Left cardiac atrium (tissue), 4 donors: ENCODE measurements at regions of chr5 and their contacts with region 1.

Region 1: GRCh38 chr5:134436523-134437339 is 25.1 kb upstream of the CDKN2AIPNL start:
- DNase-seq: peak; percentile 74
- ATAC-seq: peak; percentile 75 to 78

Region 2: DNA sequence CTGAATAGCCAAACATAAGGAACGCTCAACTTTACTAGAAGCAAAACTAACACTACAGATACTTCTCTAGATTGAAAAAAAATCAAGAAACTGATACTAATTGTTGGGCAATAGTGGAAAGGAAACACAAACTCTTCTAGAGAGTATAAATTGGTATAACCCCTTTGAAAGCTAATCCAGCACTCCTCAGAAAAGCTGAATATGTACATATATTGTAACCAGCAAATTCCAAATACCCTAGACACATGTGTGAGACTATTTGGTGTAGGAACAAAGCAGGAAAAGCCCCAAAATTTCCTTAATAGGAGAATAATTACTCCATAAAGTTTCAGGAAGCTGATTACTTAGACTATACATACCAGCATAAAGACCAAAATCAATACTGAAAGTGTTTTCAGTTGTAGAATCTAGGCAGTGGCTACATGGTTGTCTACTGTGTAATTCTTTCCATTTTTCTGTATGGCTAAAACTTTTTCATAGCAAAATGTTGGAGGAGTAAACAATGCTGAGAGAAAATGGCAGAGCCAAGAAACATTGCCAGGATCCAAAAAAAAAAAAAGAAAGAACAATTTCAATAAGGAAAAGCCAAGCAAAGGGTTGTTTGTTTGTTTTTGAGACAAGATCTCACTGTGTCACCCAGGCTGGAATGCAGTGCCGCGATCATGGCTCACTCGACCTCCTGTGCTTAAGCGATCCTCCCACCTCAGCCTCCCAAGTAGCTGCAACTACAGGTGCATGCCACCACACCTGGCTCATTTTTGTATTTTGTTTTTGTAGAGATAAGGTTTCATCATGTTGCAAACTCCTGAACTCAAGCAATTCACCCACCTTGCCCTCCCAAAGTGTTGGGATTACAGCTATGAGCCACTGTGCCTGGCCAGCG is 275.0 kb before region 1 on chr5:
- intact Hi-C with region 1: no loop called
- DNase-seq: no peak
- ATAC-seq: no peak

Region 3: GRCh38 chr5:134275822-134276221 is 160.9 kb before region 1 on chr5:
- intact Hi-C with region 1: no loop called
- DNase-seq: no peak
- ATAC-seq: no peak

Region 4: DNA sequence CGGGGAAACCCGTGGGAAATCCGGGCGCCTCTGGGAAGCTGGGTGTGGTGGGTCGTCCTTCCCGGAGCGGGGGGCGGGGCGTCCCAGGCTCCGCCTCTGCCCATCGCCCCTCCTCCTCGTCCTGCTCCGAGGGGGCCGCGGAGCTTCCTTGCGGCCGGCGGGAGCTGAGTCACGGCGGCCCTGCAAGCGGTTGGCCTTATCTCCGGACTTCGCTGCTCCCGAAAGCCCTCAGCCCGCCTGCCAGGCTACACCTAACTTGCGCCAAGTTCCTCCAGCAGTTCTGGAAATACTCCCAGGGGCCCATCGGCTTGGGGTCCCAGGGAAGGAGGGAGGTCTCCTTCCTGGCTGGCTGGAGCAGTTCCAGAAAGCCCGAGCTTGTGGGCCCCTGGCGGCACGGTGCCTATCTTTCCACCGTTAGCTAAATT is 29.1 kb after region 1 on chr5:
- intact Hi-C with region 1: loop called in 1 of 2 experiments (anchors 1 kb)
- DNase-seq: peak; percentile 94
- ATAC-seq: peak; percentile 83 to 93

Region 5: GRCh38 chr5:134577796-134578363 is 141.1 kb after region 1 on chr5:
- intact Hi-C with region 1: loop called in 1 of 2 experiments (anchors 10 kb)
- DNase-seq: peak; percentile 85
- ATAC-seq: peak; percentile 25 to 66

Region 6: DNA sequence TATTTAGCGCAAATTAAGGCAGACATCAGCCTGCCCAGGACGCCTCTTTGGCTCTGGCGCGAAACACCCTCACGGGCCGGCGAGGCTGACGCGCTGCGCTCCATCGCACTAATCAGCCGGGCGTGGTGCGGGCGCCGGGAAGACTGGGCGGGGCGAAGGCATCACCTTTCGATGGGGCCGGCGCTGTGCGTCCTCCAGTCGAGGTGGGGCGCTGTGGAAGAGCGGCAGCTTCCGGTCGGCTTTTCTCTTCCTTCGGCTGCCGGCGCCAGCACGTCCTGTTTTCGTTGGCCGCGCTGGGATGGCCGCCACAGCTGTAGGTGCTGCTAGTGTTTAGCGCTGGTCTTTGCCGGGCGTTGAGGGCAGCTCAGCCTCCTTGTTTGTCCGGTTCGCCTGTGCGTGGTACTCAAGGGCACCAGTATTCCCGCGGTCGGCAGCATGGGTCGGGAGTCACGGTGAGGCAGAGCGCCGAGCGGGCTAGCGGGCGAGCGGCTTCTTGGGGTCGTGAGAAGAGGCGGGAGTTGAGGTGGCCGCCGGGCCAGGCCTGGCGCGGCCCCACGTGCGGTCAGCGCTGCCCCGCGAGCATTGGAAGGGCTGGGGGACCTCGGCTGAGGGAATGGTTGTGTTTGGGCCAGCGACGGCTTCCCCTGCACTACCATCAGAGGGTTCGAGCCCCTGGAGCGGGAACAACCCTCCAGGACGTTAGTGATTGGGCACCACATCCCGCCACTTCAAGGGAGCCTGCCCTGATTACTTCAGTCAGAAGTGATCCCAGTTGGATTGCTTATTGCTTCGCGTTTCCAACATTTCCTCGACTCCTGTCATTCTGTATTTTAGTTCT is 322.0 kb after region 1 on chr5 and contains the start of gene DDX46:
- intact Hi-C with region 1: no loop called
- DNase-seq: peak; percentile 95
- ATAC-seq: peak; percentile 98 to 99
- total RNA-seq, gene DDX46: 21.9 to 33.1 TPM